ENCODE measurements at regions of chr6 and their contacts with region 1.

Region 1: DNA sequence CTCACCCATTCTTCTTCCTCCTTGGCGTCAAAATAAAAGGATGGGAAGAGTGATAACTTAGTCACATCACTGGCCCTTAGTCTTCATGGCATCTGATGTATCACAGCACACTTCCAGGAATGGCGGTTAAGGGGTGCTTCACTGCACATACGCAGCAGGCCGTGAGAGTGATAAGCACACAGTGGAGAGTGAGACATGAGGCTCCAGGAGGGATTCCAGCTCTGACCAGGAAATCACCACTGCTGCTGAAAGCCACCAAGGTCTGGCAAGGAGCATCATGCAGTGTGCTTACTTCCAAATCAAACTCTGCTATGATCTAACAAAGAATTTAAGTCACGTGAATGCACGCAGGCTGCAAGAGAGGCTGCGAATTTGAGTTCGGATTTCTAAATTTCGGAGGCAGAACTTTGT is 62.4 kb downstream of the ARID1B start:
- DNase-seq: peak in 3 of 4 experiments; percentile 32 to 81 (median 66)
- ATAC-seq: peak; percentile 88
- H3K4me3 ChIP-seq: no peak overlapping the region
- H3K27ac ChIP-seq: peak overlapping the region; percentile 29; the same call in 2 of the 3 replicates
- H3K4me1 ChIP-seq: peaks cover 15 to 28% of the 10 kb centered on the region in 2 experiments
- H3K27me3 ChIP-seq: no peaks in the 10 kb centered on the region
- CTCF ChIP-seq: no peak
- EP300 ChIP-seq: no peak; the same call in 1 of the 2 replicates
- POLR2A ChIP-seq: no peak
- RAD21 ChIP-seq: no peak

Region 2: DNA sequence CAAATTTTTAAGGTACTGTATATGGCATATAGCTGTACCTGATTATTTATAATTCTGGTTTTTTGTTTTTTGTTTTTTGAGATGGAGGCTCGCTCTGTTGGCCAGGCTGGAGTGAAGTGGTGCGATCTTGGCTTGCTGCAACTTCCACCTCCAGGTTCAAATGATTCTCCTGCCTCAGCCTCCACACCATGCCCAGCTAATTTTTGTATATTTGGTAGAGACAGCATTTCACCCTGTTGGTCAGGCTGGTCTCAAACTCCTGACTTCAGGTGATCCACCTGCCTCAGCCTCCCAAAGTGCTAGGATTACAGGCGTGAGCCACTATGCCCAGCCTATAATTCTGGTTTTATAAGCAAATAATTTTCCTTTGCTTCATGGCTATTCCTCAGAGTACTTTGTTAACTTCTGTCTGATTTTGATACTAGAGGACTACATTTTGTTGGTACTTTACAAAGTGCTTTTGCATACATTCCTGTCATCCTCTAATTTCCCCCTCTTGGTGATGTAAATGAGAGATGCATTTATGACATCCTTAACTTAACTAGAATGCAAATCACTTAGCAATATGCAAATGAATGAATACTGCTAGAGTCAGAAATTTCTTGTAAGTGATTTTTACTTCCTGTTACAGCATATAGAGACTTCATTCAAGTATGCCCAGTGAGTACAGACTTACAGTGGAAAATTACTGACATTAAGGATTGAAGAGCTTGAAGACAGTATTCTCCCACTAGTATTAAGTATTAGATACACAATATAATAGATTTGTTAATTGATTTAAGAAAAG is 98.1 kb before region 1 on chr6:
- CTCF ChIA-PET with region 1: no interaction called
- POLR2A ChIA-PET with region 1: no interaction called
- in situ Hi-C with region 1: no loop called
- intact Hi-C with region 1: no loop called
- DNase-seq: no peak
- ATAC-seq: no peak
- H3K4me3 ChIP-seq: no peak overlapping the region
- H3K27ac ChIP-seq: no peak overlapping the region
- H3K4me1 ChIP-seq: no peaks in the 10 kb centered on the region
- H3K27me3 ChIP-seq: peaks cover 1 to 5% of the 10 kb centered on the region in 2 experiments; a peak in 1 of 5 replicates
- CTCF ChIP-seq: no peak
- EP300 ChIP-seq: no peak
- POLR2A ChIP-seq: no peak
- RAD21 ChIP-seq: no peak

Region 3: DNA sequence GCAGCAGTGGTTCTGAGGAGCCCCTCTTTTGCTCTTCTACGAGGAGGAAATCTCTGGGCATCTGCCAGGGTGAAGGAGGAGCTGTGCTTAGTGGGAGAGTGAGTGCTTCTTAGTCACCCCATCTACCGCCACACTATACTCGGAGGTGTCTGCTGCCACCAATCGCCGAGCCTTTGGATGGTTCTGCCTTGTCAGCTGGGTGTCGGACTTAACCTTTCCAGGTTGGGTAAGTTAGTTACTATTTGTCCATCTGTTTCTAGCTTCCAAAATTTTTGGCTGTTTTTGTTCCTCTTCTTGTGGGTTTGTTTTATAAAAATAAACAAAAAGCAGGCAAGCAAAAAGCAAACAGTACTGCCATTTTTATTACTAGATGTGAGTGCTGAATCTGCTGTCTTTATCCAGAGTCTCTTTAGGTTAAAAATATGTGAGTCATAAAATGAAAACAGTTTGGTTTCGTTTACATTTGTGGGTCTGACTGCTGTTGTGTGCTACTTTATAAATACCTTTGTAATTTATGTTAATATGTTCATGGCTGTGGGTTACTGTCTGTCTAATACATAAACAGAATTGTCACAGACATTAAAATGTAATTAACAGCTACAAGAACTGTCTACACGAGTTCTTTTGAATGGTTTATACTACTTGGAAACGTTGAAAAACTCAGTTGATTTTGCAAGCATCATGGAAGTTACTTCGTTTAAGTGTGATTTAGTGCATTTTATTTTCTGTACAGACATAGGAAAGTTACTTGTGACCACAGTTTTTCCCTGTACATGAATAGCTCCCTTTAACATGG is 26.8 kb after region 1 on chr6:
- CTCF ChIA-PET with region 1: no interaction called
- POLR2A ChIA-PET with region 1: no interaction called
- in situ Hi-C with region 1: no loop called
- intact Hi-C with region 1: loop called (anchors 1 kb)
- DNase-seq: peak in 1 of 4 experiments; percentile 34
- ATAC-seq: peak; percentile 63
- H3K4me3 ChIP-seq: no peak overlapping the region
- H3K27ac ChIP-seq: no peak overlapping the region
- H3K4me1 ChIP-seq: peaks cover 7 to 15% of the 10 kb centered on the region in 2 experiments; a peak in 3 of 5 replicates
- H3K27me3 ChIP-seq: no peaks in the 10 kb centered on the region
- CTCF ChIP-seq: peak in 1 of 3 experiments; percentile 33; a peak in 2 of 6 replicates
- EP300 ChIP-seq: no peak
- POLR2A ChIP-seq: no peak
- RAD21 ChIP-seq: peak; percentile 17 to 46; a peak in 2 of 4 replicates

Region 4: DNA sequence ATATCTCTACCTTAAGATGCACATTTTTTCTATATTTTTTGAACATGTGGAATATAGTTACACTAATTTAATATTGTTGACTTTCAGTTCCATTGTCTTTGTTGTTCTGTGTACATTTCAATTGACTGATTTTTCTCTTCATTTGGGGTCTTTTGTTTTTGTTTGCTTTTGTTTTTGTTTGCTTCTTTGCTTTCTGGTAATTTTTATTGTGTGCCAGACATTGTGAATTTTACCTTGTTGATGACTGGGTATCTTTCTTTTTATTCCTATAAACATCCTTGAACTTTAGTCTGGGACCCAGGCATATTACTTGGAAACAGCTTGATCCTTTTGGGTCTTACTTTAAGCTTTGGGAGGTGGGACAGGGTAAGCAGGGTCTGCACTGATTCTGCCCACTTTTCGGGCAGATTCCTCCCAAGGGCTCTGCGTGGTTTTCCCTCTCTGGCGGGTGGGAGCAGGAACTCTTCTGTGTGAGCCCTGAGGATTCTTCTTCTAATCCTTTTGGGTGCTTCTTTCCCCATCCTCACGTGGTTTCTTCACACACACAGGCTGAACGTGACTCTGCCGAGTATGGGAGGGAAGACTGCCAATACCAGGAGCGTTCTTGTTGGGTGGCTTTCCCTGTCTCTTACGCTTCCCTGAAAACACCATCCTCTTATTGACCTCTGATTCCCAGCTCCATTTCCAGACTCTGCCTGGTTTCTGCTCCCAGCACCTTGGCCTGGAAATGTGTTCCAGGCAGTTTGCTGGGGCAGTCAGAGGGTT is 138.1 kb after region 1 on chr6:
- CTCF ChIA-PET with region 1: no interaction called
- POLR2A ChIA-PET with region 1: no interaction called
- in situ Hi-C with region 1: no loop called
- intact Hi-C with region 1: no loop called
- DNase-seq: no peak
- ATAC-seq: 0 out of 3 replicates have a peak, but pooled peaks have one; percentile 20
- H3K4me3 ChIP-seq: no peak overlapping the region
- H3K27ac ChIP-seq: no peak overlapping the region
- H3K4me1 ChIP-seq: peaks cover 0 to 2% of the 10 kb centered on the region in 2 experiments; a peak in 2 of 5 replicates
- H3K27me3 ChIP-seq: no peaks in the 10 kb centered on the region
- CTCF ChIP-seq: no peak
- EP300 ChIP-seq: no peak
- POLR2A ChIP-seq: no peak
- RAD21 ChIP-seq: no peak

Measured in K562 (cell line).